ENCODE measurements at regions of chr20 and their contacts with region 1.

Region 1: DNA sequence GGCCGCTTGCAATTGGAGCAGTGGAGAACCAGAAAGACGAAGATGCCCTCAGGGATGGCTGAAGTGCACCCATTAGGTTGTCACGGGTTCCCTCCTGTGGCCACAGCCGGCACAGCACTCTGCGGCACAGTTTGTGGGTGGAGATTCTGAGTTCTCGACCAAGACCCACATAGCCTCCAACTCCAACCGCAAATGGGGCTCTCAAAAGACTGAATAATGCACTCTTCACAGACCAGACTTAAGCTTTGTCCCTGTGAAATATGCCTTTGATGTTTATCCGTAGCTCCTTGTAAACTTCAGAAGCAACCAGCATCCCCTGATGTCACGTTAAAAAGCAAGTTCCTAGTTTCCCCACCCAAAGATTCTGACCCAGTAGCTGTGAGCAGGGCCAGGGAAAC is 934 bp upstream of the CST9 start:
- DNase-seq: peak; percentile 34
- H3K4me3 Mint-ChIP-seq: no peak overlapping the region
- H3K27ac Mint-ChIP-seq: no peak overlapping the region
- H3K4me1 Mint-ChIP-seq: peaks cover 4% of the 10 kb centered on the region
- H3K27me3 Mint-ChIP-seq: peaks cover 3% of the 10 kb centered on the region

Region 2: GRCh38 chr20:23340524-23340923 is 266.1 kb before region 1 on chr20:
- intact Hi-C with region 1: no loop called
- DNase-seq: no peak
- H3K4me3 Mint-ChIP-seq: no peak overlapping the region
- H3K27ac Mint-ChIP-seq: no peak overlapping the region
- H3K4me1 Mint-ChIP-seq: peaks cover 7% of the 10 kb centered on the region
- H3K27me3 Mint-ChIP-seq: peaks cover 2% of the 10 kb centered on the region

Region 3: GRCh38 chr20:23441850-23442313 is 164.8 kb before region 1 on chr20:
- intact Hi-C with region 1: loop called (anchors 1 kb)
- DNase-seq: peak; percentile 34
- H3K4me3 Mint-ChIP-seq: no peak overlapping the region
- H3K27ac Mint-ChIP-seq: no peak overlapping the region
- H3K4me1 Mint-ChIP-seq: no peaks in the 10 kb centered on the region
- H3K27me3 Mint-ChIP-seq: no peaks in the 10 kb centered on the region

Measured in activated T-helper 2 cell treated with anti-CD3 and anti-CD28 coated beads, Interferon-gamma antibody, Interleukin-2, Interleukin-4, amounts not matched to agents 10 μg/mL and 5 μg/mL and 100 μg/mL, durations not matched to agents 14 hours and 24 hours and 36 hours (primary cell).